ENCODE measurements at regions of chr2 and their contacts with region 1.

Region 1: GRCh38 chr2:21175895-21176646 is 52.3 kb downstream of the TDRD15 start:
- DNase-seq: no peak
- ATAC-seq: peak; percentile 81

Region 2: GRCh38 chr2:21317131-21317530 is 141.1 kb after region 1 on chr2:
- intact Hi-C with region 1: loop called (anchors 2 kb)
- DNase-seq: peak; percentile 51
- ATAC-seq: peak; percentile 84

Region 3: GRCh38 chr2:21381421-21381820 is 205.3 kb after region 1 on chr2:
- intact Hi-C with region 1: no loop called
- DNase-seq: no peak
- ATAC-seq: no peak

Measured in Right ventricle myocardium superior (tissue), 1 donor.